ENCODE measurements at regions of chr16 and their contacts with region 1.

Region 1: GRCh38 chr16:71961066-71962039 is 38.8 kb downstream of the PKD1L3 start:
- DNase-seq: peak; percentile 84
- ATAC-seq: peak; percentile 99
- H3K4me3 ChIP-seq: no peak overlapping the region
- H3K27ac ChIP-seq: no peak overlapping the region
- H3K4me1 ChIP-seq: peaks cover 0 to 5% of the 10 kb centered on the region in 2 experiments; a peak in 1 of 4 replicates
- H3K27me3 ChIP-seq: no peaks in the 10 kb centered on the region
- CTCF ChIP-seq: peak; percentile 82 to 89 (median 86)
- POLR2A ChIP-seq: no peak
- RAD21 ChIP-seq: peak; percentile 95

Region 2: GRCh38 chr16:71564155-71564967 is 397.0 kb before region 1 on chr16:
- CTCF ChIA-PET with region 1: interaction called, 12 read pairs
- POLR2A ChIA-PET with region 1: interaction called, 3 read pairs
- RAD21 ChIA-PET with region 1: interaction called, 3 read pairs
- intact Hi-C with region 1: no loop called
- DNase-seq: no peak
- ATAC-seq: peak; percentile 6
- H3K4me3 ChIP-seq: peak overlapping the region; percentile 65 to 69
- H3K27ac ChIP-seq: peak overlapping the region; percentile 31; the same call in 1 of the 2 replicates
- H3K4me1 ChIP-seq: peaks cover 14 to 18% of the 10 kb centered on the region in 2 experiments
- H3K27me3 ChIP-seq: no peaks in the 10 kb centered on the region
- CTCF ChIP-seq: no peak
- POLR2A ChIP-seq: no peak
- RAD21 ChIP-seq: no peak

Region 3: DNA sequence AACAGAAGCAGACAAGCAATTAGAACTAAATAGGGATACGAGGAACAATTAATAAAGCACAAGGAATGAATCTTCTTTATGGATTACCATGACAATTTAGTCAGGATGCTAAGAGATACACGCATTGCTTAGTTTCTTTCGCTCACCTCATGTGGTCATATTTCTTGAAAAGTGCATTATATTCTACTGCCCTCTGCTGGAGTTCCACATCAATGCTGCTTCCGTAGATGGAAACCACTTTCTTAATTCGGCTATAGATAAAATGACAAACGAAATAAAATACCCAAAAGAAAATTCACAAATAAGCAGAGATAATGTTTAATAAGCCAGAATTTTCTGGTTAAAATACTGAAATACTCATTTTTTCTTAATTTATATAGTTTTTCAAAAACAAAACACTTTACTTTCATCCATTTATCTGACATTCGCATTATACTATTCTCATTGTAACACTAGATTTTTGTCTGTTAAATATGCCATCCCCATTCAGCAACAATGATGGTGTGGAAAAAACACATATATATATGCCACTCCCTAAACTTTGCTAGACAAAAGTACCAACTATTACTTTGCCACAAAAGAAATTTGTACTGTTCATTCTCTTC is 214.8 kb before region 1 on chr16:
- CTCF ChIA-PET with region 1: no interaction called
- POLR2A ChIA-PET with region 1: no interaction called
- RAD21 ChIA-PET with region 1: no interaction called
- intact Hi-C with region 1: loop called (anchors 1 kb)
- DNase-seq: peak; percentile 26
- ATAC-seq: peak; percentile 61; the same call in 1 of the 2 replicates
- H3K4me3 ChIP-seq: no peak overlapping the region
- H3K27ac ChIP-seq: no peak overlapping the region
- H3K4me1 ChIP-seq: no peaks in the 10 kb centered on the region
- H3K27me3 ChIP-seq: no peaks in the 10 kb centered on the region
- CTCF ChIP-seq: peak; percentile 69 to 87 (median 79); a peak in 5 of 6 replicates
- POLR2A ChIP-seq: no peak
- RAD21 ChIP-seq: peak; percentile 70

Region 4: GRCh38 chr16:71781741-71782140 is 179.6 kb before region 1 on chr16:
- CTCF ChIA-PET with region 1: no interaction called
- POLR2A ChIA-PET with region 1: no interaction called
- RAD21 ChIA-PET with region 1: no interaction called
- intact Hi-C with region 1: loop called (anchors 10 kb)
- DNase-seq: no peak
- ATAC-seq: no peak
- H3K4me3 ChIP-seq: no peak overlapping the region
- H3K27ac ChIP-seq: no peak overlapping the region
- H3K4me1 ChIP-seq: peaks cover 3 to 6% of the 10 kb centered on the region in 2 experiments; a peak in 2 of 4 replicates
- H3K27me3 ChIP-seq: no peaks in the 10 kb centered on the region
- CTCF ChIP-seq: no peak
- POLR2A ChIP-seq: no peak
- RAD21 ChIP-seq: no peak

Region 5: DNA sequence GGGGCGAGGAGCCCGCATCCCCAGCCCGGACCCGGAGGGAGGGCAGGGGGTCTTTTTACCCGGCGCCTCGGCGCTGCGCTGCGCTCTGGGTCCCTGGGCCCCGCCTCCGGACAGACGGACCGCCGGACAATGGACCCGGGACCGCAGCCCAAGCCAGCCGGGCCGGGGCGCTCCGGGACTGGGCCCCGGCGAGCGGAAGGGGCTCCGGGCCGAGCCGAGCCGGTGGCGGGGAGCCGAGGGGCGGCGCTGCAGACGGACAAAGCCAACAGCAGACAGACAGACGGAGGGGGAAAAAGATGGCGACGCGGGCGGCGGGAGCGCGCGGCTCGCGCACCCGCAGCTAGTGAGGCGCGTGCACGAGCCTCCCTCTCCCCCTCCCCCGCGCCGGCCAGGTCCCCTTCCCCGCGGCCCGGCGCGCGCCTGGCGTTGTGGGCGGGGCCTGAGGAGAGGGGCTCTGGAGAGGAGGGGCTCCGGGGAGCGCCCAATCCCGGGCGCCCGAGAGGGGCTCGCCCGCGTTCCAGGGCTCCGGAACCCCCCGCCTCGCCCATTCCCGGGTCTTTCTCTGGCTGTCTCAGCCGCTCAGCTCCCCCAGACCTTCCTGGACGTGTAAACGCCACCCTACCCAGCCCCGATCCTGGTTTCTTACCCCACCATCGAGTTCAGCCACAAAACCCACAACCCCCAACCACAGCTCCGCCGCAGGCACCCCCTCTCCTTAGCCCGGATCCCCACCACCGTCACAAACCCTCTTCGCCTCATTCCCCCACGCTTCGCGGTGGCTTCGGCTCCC is 77.3 kb before region 1 on chr16 and contains the start of gene ZNF821:
- CTCF ChIA-PET with region 1: interaction called, 11 read pairs
- POLR2A ChIA-PET with region 1: no interaction called
- RAD21 ChIA-PET with region 1: no interaction called
- intact Hi-C with region 1: loop called (anchors 2 kb)
- DNase-seq: no peak
- ATAC-seq: peak; percentile 70
- H3K4me3 ChIP-seq: peak within 1 kb of the TSS; percentile 61 to 73
- H3K27ac ChIP-seq: peak within 1 kb of the TSS; percentile 79
- H3K4me1 ChIP-seq: peaks cover 14 to 18% of the 10 kb centered on the region in 2 experiments
- H3K27me3 ChIP-seq: no peaks in the 10 kb centered on the region
- CTCF ChIP-seq: peak in 1 of 3 experiments; percentile 21; a peak in 2 of 6 replicates
- POLR2A ChIP-seq: no peak
- RAD21 ChIP-seq: no peak
- total RNA-seq, gene ZNF821: 4.9 TPM

Region 6: DNA sequence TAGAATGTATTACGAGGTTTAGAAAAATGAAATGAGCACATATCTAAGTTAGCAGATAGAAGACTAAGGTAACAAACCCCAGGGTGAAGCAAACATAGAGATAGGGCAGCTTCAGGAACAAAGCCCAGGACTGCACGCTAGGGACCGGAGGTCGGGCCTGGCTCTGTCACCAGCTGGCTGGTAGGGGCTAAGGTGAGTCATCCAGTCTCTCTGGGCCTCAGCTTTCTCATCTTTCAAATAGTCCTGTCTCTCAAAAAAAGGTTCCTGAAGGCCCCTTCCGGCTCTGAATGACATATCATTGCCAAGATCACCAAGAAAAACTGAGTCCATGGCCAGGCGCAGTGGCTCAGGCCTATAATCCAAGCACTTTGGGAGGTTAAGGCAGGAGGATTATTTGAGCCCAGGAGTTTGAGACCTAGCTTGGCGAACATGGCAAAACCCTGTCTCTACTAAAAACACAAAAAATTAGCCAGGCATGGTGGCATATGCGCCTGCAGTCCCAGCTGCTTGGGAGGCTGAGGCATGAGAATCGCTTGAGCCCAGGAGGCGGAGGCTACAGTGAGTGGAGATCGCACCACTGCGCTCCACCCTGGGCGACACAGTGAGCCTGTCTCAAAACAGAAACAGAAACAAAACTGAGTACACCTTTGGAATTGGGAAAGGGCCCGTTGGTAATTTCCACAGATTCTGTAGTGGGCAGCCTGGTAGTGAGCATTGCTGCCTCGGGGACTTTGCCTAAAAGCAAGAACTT is 12.9 kb after region 1 on chr16:
- CTCF ChIA-PET with region 1: interaction called, 16 read pairs
- POLR2A ChIA-PET with region 1: no interaction called
- RAD21 ChIA-PET with region 1: no interaction called
- intact Hi-C with region 1: no loop called
- DNase-seq: no peak
- ATAC-seq: no peak
- H3K4me3 ChIP-seq: no peak overlapping the region
- H3K27ac ChIP-seq: no peak overlapping the region
- H3K4me1 ChIP-seq: no peaks in the 10 kb centered on the region
- H3K27me3 ChIP-seq: no peaks in the 10 kb centered on the region
- CTCF ChIP-seq: no peak
- POLR2A ChIP-seq: no peak
- RAD21 ChIP-seq: no peak